Activated naive CD4-positive, alpha-beta T cell treated with anti-CD3 and anti-CD28 coated beads, Interleukin-2, amount 10 ng/mL, durations not matched to agents 7 days and 5 days (primary cell): ENCODE measurements at regions of chr6 and their contacts with region 1.

Region 1: GRCh38 chr6:10510592-10511367 is 10.4 kb upstream of the GCNT2 start:
- DNase-seq: peak; percentile 70
- H3K4me3 Mint-ChIP-seq: no peak overlapping the region
- H3K27ac Mint-ChIP-seq: no peak overlapping the region
- H3K4me1 Mint-ChIP-seq: peaks cover 3% of the 10 kb centered on the region
- H3K27me3 Mint-ChIP-seq: peaks cover 20% of the 10 kb centered on the region

Region 2: DNA sequence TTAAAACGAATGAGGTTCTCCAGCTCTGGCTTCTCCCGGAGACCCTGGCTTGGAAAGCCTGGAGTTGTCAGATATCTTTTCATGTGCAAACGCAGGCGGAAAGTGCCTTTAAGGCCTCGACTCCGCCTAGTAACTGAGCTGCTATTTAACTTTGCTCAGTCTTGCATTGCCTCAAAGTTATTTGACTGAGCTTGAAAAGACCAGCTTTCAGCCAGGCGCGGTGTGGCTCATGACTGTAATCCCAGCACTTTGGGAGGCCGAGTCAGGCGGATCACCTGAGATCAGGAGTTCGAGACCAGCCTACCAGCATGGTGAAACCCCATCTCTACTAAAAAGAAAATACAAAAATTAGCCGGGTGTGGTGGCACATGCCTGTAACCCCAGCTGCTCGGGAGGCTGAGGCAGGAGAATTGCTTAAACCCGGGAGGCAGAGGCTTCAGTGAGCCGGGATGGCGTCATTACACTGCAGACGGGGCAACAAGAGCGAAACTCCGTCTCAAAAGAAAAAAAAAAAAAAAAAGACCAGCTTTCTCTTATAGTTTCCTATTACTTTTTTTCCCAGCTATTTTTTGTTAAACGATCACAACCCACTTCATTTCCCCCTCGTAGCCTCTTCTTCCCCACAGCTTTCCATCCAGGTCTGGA is 12.3 kb after region 1 on chr6:
- CTCF ChIA-PET with region 1: interaction called, 11 read pairs
- DNase-seq: no peak
- H3K4me3 Mint-ChIP-seq: no peak overlapping the region
- H3K27ac Mint-ChIP-seq: no peak overlapping the region
- H3K4me1 Mint-ChIP-seq: peaks cover 5% of the 10 kb centered on the region
- H3K27me3 Mint-ChIP-seq: peaks cover 11% of the 10 kb centered on the region

Region 3: DNA sequence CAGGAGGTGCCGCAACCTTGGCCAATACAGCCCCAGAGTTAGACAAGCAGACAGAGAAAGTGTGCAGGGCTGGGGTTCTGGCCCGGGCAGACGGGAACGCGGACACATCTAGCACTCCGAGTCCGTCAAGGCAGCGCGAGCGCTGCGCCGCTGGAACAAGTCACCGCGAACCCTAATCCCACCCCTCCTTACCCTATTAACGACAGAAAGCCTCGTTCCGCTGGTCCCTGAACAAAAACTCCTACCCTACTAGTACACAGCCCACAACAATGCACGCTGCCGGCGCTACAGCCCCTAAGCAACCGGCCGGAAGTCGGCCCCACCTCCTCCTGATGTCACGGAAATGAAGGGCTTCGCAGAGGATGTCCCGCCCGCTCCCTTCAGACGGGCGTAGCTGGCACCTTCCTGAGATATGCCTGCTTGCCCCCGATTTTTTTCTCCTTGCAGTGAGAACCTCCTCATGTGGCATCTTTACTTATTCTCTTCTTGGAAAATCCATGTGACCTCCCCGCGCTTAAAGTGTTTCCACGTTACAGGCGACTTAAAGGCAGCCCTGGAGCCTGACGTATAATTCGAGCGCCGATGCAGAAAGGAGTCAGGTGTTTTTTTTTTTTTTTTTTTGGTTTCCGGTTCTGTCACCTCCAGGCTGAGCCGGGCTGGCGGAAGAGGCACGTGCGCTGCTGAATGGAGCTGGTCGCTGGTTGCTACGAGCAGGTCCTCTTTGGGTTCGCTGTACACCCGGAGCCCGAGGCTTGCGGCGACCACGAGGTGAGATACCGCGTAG is 183.7 kb after region 1 on chr6 and contains the starts of genes C6orf52 and PAK1IP1:
- CTCF ChIA-PET with region 1: interaction called, 10 read pairs
- DNase-seq: peak; percentile 96
- H3K4me3 Mint-ChIP-seq: peak within 1 kb of the TSS; percentile 95
- H3K27ac Mint-ChIP-seq: peak within 1 kb of the TSS; percentile 100
- H3K4me1 Mint-ChIP-seq: peaks cover 45% of the 10 kb centered on the region
- H3K27me3 Mint-ChIP-seq: peaks cover 4% of the 10 kb centered on the region

Region 4: DNA sequence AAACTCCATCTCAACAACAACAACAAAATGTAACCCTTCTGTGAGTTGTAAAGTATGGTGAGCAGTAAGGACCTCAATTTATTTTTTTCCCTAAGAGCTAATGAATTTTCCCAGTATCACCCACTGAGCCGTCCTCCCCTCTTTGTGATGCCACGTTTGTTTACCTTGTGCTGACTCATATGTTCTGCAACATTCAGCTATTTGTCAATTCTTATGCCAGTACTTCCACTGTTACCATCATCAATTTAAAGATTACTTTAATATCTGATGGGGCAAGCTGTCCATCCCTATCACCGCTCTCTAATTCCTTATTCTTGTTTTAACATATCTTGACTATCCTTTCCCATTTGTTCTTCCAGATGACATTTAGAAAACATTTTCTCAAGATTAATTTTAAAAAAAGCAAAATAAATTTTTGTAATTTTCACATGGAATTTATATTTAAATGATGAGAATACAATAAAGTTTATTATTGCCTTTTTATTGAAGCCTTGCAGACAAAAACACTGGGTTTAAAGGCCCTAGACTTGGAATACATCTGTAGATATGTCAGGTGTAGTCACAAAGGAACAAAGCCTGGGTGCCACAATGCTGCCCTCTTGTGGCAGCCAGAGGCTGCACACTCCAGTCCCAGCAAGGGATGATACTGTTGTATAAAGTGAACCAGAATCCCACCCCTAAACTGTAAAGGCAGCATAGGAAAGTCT is 290.2 kb after region 1 on chr6:
- CTCF ChIA-PET with region 1: interaction called, 43 read pairs
- DNase-seq: peak; percentile 75
- H3K4me3 Mint-ChIP-seq: no peak overlapping the region
- H3K27ac Mint-ChIP-seq: no peak overlapping the region
- H3K4me1 Mint-ChIP-seq: no peaks in the 10 kb centered on the region
- H3K27me3 Mint-ChIP-seq: no peaks in the 10 kb centered on the region